ENCODE measurements at regions of chr9 and their contacts with region 1.

Region 1: GRCh38 chr9:104780799-104781395 is 17.0 kb downstream of the NIPSNAP3B start:
- DNase-seq: no peak
- CTCF ChIP-seq: peak; percentile 59

Region 2: DNA sequence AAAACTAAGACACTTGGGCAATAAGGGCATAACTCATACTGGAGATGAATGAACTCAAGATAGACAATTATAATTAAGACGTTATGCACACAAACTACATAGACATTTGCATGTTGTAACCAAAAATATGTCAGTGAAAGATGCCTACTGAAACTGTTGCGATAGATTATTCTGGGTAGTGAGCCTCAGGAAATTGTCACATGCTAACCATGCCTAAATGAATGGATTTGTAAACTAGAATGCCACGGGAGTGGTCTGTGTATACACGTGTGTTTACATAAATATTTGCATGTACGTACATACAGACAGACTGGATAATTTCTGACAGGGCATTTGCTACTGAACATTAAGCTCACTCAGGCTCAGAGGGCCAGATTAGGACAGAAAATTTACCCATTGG is 15.8 kb before region 1 on chr9:
- CTCF ChIA-PET with region 1: interaction called, 13 read pairs
- POLR2A ChIA-PET with region 1: no interaction called
- DNase-seq: no peak
- CTCF ChIP-seq: no peak

Region 3: DNA sequence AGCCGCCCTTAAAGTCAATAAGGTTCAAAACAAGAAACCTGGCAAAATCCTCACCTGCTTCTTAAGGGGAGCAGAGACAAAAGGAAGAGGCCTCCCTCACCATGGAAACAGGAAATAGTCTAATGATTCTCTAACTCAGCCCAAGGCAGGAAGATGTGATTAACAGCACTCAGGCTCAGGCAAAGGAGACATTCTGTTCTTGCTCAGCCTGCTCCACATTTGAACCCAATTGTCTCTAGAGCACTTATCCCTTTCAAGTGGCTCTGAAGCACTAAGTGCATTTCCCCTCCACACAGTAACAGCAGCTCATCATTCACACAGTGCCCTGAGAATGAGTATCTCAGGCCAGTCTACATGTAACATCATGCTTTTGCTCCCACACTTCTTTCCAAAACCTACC is 55.3 kb after region 1 on chr9:
- CTCF ChIA-PET with region 1: no interaction called
- POLR2A ChIA-PET with region 1: no interaction called
- DNase-seq: no peak
- CTCF ChIP-seq: no peak

Measured in GM10248 (cell line).